ENCODE measurements at regions of chrX and their contacts with region 1.

Region 1: DNA sequence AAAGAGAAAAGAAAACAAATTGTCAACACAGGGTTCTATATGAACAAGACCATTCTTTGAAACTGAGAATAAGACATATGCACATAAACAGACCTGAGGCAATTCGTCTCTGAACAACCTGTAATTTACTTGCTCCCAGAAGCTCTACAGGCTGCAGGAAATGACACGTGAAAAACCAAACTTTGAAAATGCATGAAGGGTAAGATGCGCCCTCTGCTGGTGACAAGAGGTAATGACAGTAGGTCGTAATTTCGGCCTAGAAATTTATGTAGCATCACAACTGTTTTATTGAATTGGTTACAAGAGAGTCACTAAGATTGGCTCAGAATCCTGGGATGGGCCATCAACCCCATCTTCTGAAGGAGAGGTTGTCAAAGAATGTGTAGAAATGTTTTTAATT is 276.5 kb downstream of the PPP4R3C start:
- DNase-seq: peak; percentile 24
- ATAC-seq: no peak
- H3K4me3 ChIP-seq: no peak overlapping the region
- H3K27ac ChIP-seq: no peak overlapping the region
- H3K4me1 ChIP-seq: no peaks in the 10 kb centered on the region
- H3K27me3 ChIP-seq: no peaks in the 10 kb centered on the region
- CTCF ChIP-seq: peak; percentile 73

Region 2: GRCh38 chrX:26783512-26784225 is 403.0 kb before region 1 on chrX:
- CTCF ChIA-PET with region 1: no interaction called
- POLR2A ChIA-PET with region 1: no interaction called
- in situ Hi-C with region 1: no loop called
- intact Hi-C with region 1: loop called (anchors 5 kb)
- DNase-seq: peak; percentile 10
- ATAC-seq: no peak
- H3K4me3 ChIP-seq: no peak overlapping the region
- H3K27ac ChIP-seq: no peak overlapping the region
- H3K4me1 ChIP-seq: no peaks in the 10 kb centered on the region
- H3K27me3 ChIP-seq: no peaks in the 10 kb centered on the region
- CTCF ChIP-seq: peak; percentile 50